GM12878 (cell line): ENCODE measurements at regions of chr13 and their contacts with region 1.

Region 1: GRCh38 chr13:90867336-90867683 is 480.2 kb upstream of the MIR17HG start:
- DNase-seq: peak; percentile 24
- ATAC-seq: peak; percentile 100
- H3K4me3 ChIP-seq: no peak overlapping the region
- H3K27ac ChIP-seq: no peak overlapping the region
- H3K4me1 ChIP-seq: no peaks in the 10 kb centered on the region
- H3K27me3 ChIP-seq: no peaks in the 10 kb centered on the region
- CTCF ChIP-seq: peak; percentile 52 to 67 (median 65)
- EP300 ChIP-seq: no peak
- POLR2A ChIP-seq: no peak
- RAD21 ChIP-seq: peak; percentile 77

Region 2: DNA sequence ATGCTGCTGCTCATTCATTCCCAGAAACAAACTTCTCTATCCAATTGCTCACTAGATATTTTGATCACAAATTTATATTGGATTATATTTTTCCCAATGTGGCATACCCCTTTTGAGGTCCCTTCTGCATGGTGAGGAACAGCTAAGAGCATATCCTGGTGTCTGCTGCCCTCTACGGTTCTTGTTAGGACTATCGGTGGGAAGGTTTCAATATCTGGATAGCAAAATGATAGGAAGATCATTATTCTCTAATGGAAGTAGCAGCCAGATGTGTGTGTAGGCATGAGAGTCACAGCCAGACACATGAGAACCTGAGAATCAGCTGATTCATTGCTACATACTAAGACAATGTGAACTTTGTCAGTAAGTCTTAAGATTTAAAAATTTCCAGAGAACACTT is 942.2 kb before region 1 on chr13:
- CTCF ChIA-PET with region 1: interaction called, 3 read pairs
- POLR2A ChIA-PET with region 1: no interaction called
- RAD21 ChIA-PET with region 1: no interaction called
- SMC1A ChIA-PET with region 1: no interaction called
- in situ Hi-C with region 1: no loop called
- intact Hi-C with region 1: loop called (anchors 10 kb)
- DNase-seq: no peak
- ATAC-seq: peak; percentile 62
- H3K4me3 ChIP-seq: no peak overlapping the region
- H3K27ac ChIP-seq: no peak overlapping the region
- H3K4me1 ChIP-seq: no peaks in the 10 kb centered on the region
- H3K27me3 ChIP-seq: no peaks in the 10 kb centered on the region
- CTCF ChIP-seq: peak in 2 of 3 experiments; percentile 34 to 52; a peak in 3 of 6 replicates
- EP300 ChIP-seq: no peak
- POLR2A ChIP-seq: no peak
- RAD21 ChIP-seq: peak; percentile 44; the same call in 1 of the 2 replicates

Region 3: DNA sequence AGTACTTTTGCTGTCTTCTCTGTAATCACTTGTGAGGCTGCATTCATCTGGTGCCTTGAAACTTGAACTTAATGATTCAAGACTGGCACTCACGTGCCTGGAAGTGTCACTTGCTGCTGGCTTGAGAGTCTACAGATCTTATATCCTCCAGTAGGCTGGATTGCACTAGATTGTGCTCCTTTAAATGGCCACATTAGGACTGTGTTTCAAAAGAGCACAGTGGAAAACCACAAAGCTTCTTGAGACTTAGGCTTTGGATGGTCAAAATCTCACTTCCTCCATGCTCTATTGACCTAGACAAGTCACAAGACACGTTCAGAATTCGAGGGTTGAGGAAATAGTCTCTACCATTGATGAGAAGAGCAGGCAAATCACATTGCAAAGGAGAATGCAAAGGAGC is 798.7 kb before region 1 on chr13:
- CTCF ChIA-PET with region 1: no interaction called
- POLR2A ChIA-PET with region 1: no interaction called
- RAD21 ChIA-PET with region 1: no interaction called
- SMC1A ChIA-PET with region 1: no interaction called
- in situ Hi-C with region 1: no loop called
- intact Hi-C with region 1: loop called (anchors 10 kb)
- DNase-seq: no peak
- ATAC-seq: peak; percentile 62
- H3K4me3 ChIP-seq: no peak overlapping the region
- H3K27ac ChIP-seq: no peak overlapping the region
- H3K4me1 ChIP-seq: no peaks in the 10 kb centered on the region
- H3K27me3 ChIP-seq: no peaks in the 10 kb centered on the region
- CTCF ChIP-seq: no peak
- EP300 ChIP-seq: no peak
- POLR2A ChIP-seq: no peak
- RAD21 ChIP-seq: no peak

Region 4: DNA sequence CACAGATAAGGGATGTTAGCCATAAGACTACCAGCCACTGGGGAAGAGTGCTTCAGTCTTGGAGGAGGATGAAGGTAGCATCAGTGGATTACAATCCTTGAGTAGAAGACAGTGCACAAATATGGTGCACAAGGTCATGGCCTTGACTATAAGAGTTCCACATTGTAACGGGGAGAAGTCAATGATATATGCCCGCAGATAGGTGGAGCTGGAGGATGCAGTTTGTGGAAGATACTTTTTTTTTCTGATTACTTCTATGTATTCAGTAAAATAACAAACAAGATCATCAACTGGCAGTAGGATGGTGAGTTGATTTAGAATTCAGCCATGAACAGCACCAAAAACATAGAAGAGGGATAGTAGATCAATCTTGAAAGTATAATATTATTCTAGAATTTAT is 446.6 kb before region 1 on chr13:
- CTCF ChIA-PET with region 1: interaction called, 5 read pairs
- POLR2A ChIA-PET with region 1: no interaction called
- RAD21 ChIA-PET with region 1: interaction called, 3 read pairs
- SMC1A ChIA-PET with region 1: interaction called, 3 read pairs
- in situ Hi-C with region 1: no loop called
- intact Hi-C with region 1: loop called (anchors 5 kb)
- DNase-seq: no peak
- ATAC-seq: peak; percentile 48; the same call in 2 of the 3 replicates
- H3K4me3 ChIP-seq: no peak overlapping the region
- H3K27ac ChIP-seq: no peak overlapping the region
- H3K4me1 ChIP-seq: no peaks in the 10 kb centered on the region
- H3K27me3 ChIP-seq: no peaks in the 10 kb centered on the region
- CTCF ChIP-seq: no peak; a peak in 1 of 6 replicates
- EP300 ChIP-seq: no peak
- POLR2A ChIP-seq: no peak
- RAD21 ChIP-seq: no peak

Region 5: DNA sequence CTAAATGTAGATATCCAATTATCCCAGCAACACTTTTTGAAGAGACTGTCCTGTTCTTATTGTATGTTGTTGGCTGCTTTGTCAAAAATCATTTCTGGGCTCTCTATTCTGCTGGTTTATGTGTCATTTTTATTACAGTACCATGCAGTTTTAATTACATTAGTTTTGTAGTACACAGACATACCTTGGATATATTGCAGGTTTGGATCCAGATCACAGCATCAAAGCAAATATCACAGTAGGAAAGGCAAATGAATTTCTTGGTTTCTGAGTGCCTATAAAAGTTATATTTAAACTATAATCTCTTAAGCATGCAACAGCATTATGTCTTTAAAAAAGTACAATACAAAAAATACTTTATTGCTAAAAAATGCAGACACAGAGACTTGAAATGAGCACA is 84.0 kb before region 1 on chr13:
- CTCF ChIA-PET with region 1: no interaction called
- POLR2A ChIA-PET with region 1: no interaction called
- RAD21 ChIA-PET with region 1: no interaction called
- SMC1A ChIA-PET with region 1: no interaction called
- in situ Hi-C with region 1: no loop called
- intact Hi-C with region 1: no loop called
- DNase-seq: no peak
- ATAC-seq: no peak
- H3K4me3 ChIP-seq: no peak overlapping the region
- H3K27ac ChIP-seq: no peak overlapping the region
- H3K4me1 ChIP-seq: no peaks in the 10 kb centered on the region
- H3K27me3 ChIP-seq: no peaks in the 10 kb centered on the region
- CTCF ChIP-seq: no peak
- EP300 ChIP-seq: no peak
- POLR2A ChIP-seq: no peak
- RAD21 ChIP-seq: no peak

Region 6: DNA sequence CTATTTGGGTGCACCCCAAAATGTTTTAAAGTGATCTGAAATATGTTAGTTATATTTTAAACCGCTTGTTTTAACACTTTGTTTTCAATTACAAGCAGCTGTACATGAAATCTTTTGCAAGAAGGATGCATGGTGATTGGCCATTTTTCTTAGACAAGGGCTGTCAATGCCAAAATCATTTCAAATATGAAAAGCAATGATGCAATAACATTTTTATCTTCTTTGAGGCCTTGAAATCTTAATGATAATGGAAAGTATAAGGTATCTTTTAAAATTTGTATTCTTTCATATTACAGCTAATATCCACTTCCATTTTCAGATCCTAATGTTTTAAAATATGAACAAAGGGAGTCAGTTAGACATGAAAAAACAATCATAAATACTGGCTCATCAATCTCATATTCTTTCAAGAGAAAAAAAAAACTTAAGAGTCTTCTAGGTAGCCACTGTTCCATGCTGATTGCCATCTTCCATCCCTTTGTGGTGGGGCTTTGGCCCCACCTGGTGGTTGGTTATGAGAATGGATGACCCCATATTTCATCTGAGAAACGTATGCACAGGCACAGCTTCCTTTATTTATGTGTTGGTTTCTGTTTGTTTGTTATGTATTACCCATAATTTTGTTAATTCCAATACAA is 149.8 kb after region 1 on chr13:
- CTCF ChIA-PET with region 1: interaction called, 11 read pairs
- POLR2A ChIA-PET with region 1: no interaction called
- RAD21 ChIA-PET with region 1: no interaction called
- SMC1A ChIA-PET with region 1: no interaction called
- in situ Hi-C with region 1: no loop called
- intact Hi-C with region 1: loop called (anchors 5 kb)
- DNase-seq: peak; percentile 9
- ATAC-seq: peak; percentile 99
- H3K4me3 ChIP-seq: no peak overlapping the region
- H3K27ac ChIP-seq: no peak overlapping the region
- H3K4me1 ChIP-seq: no peaks in the 10 kb centered on the region
- H3K27me3 ChIP-seq: no peaks in the 10 kb centered on the region
- CTCF ChIP-seq: peak; percentile 73 to 75 (median 74); a peak in 5 of 6 replicates
- EP300 ChIP-seq: no peak
- POLR2A ChIP-seq: no peak
- RAD21 ChIP-seq: peak; percentile 84